Breast epithelium (tissue), 4 donors: ENCODE measurements at regions of chr2 and their contacts with region 1.

Region 1: GRCh38 chr2:59826177-59826576 is 727.3 kb downstream of the BCL11A start:
- DNase-seq: no peak
- H3K4me3 ChIP-seq: no peak overlapping the region
- H3K27ac ChIP-seq: no peak overlapping the region
- H3K4me1 ChIP-seq: no peaks in the 10 kb centered on the region
- H3K27me3 ChIP-seq: no peaks in the 10 kb centered on the region
- CTCF ChIP-seq: no peak
- POLR2A ChIP-seq: no peak

Region 2: DNA sequence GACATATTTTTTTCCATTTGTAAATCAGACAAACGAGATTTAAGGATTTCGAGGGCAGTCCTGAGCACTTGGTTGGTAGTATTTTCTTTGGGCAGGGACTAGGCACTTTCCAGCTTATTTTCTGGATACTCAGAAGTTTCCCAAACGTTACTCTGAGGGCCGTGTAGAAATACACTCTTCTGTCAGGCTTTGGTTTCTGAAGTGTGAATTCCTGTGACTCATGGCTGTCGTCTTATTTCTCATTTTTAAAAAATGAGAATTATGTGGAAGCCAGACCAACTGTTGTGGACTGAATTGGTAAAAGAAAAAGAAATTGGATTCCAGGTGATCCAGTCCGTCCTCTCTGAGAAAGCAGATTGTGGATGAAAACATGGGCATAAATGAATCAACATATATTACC is 926.5 kb before region 1 on chr2:
- intact Hi-C with region 1: loop called (anchors 5 kb)
- DNase-seq: no peak
- H3K4me3 ChIP-seq: no peak overlapping the region
- H3K27ac ChIP-seq: no peak overlapping the region
- H3K4me1 ChIP-seq: no peaks in the 10 kb centered on the region
- H3K27me3 ChIP-seq: no peaks in the 10 kb centered on the region
- CTCF ChIP-seq: no peak
- POLR2A ChIP-seq: no peak

Region 3: DNA sequence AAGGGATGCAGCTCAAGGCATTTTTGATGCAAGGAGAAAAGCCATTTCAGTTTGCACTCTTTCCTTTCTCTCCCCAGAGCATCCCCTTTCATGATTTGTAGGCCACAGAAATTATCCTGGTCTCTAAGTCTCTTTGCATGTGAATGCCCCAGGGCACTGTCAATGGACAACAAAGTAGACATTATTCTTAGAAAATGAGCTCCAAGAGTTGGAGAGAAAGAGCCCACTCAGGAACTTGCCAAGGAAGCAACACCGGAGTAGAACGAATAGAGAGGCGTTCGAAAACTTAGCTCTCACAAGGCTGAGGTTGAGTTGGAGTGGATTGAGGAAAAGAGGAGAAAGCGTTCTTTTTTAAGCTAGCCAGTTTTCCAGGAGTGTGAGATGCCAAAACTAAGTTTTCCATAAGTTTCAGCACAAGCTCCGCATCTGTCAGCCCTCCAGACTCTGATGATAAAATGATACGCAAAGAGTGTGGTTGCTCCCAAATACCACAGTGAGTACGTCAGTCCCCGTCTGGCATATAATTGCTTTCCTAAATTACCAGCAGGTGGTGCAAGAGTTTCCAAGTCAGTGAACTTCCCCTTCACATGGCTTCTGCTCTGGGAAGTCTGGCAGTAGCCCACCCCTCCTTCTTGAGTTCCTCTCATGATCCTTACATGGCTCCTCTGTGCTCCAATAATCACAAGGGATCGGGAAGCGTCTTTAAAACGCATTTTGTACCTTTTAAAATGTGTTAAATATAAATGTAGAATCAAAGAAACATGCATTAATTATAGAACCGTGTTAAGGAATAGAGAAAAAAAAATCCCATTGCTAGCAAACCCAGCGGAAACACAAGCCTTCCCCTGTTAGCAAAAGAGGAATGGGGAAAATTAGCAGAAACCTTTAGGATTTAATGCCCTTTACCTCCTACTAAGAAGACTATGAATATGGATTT is 524.4 kb before region 1 on chr2:
- intact Hi-C with region 1: no loop called
- DNase-seq: peak in 1 of 2 donors; percentile 42
- H3K4me3 ChIP-seq: no peak overlapping the region
- H3K27ac ChIP-seq: peak overlapping the region in 1 of 2 donors; percentile 12
- H3K4me1 ChIP-seq: no peaks in the 10 kb centered on the region
- H3K27me3 ChIP-seq: no peaks in the 10 kb centered on the region
- CTCF ChIP-seq: peak in 2 of 3 donors; percentile 54 to 78
- POLR2A ChIP-seq: no peak

Region 4: DNA sequence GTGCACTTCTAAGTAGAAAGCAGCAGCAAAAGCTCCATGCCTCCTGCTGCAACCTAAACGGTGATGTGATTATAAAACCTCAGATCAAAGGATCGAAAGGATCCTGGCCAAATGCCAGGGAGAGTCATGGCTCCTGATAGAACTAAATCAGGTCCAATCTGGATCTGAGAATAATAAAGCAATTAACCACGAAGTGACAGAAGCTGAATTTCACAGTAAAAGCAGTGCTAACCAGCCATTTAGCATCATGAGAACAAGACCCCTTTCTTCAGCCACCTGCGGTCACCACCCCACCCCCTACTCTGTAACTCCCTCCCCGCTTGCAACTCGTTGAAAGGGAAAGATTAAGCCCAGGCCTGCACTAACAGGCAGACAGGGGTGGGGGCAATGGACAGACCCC is 21.4 kb before region 1 on chr2:
- intact Hi-C with region 1: no loop called
- DNase-seq: no peak
- H3K4me3 ChIP-seq: no peak overlapping the region
- H3K27ac ChIP-seq: no peak overlapping the region
- H3K4me1 ChIP-seq: no peaks in the 10 kb centered on the region
- H3K27me3 ChIP-seq: no peaks in the 10 kb centered on the region
- CTCF ChIP-seq: no peak
- POLR2A ChIP-seq: no peak

Region 5: GRCh38 chr2:59866436-59866835 is 40.3 kb after region 1 on chr2:
- intact Hi-C with region 1: no loop called
- DNase-seq: no peak
- H3K4me3 ChIP-seq: no peak overlapping the region
- H3K27ac ChIP-seq: no peak overlapping the region
- H3K4me1 ChIP-seq: no peaks in the 10 kb centered on the region
- H3K27me3 ChIP-seq: no peaks in the 10 kb centered on the region
- CTCF ChIP-seq: no peak
- POLR2A ChIP-seq: no peak

Region 6: GRCh38 chr2:59888015-59888414 is 61.8 kb after region 1 on chr2:
- intact Hi-C with region 1: loop called (anchors 2 kb)
- DNase-seq: no peak
- H3K4me3 ChIP-seq: no peak overlapping the region
- H3K27ac ChIP-seq: no peak overlapping the region
- H3K4me1 ChIP-seq: no peaks in the 10 kb centered on the region
- H3K27me3 ChIP-seq: no peaks in the 10 kb centered on the region
- CTCF ChIP-seq: no peak
- POLR2A ChIP-seq: no peak

Region 7: GRCh38 chr2:60826111-60826510 is 999.9 kb after region 1 on chr2:
- intact Hi-C with region 1: no loop called
- DNase-seq: no peak
- H3K4me3 ChIP-seq: no peak overlapping the region
- H3K27ac ChIP-seq: no peak overlapping the region
- H3K4me1 ChIP-seq: no peaks in the 10 kb centered on the region
- H3K27me3 ChIP-seq: no peaks in the 10 kb centered on the region
- CTCF ChIP-seq: no peak
- POLR2A ChIP-seq: no peak